ENCODE measurements at regions of chr1 and their contacts with region 1.

Region 1: GRCh38 chr1:233240829-233241682 is 54.5 kb downstream of the PCNX2 start:
- DNase-seq: peak; percentile 65
- H3K4me3 ChIP-seq: no peak overlapping the region
- H3K27ac ChIP-seq: no peak overlapping the region
- H3K4me1 ChIP-seq: no peaks in the 10 kb centered on the region
- H3K27me3 ChIP-seq: no peaks in the 10 kb centered on the region
- CTCF ChIP-seq: peak; percentile 76 to 81
- POLR2A ChIP-seq: no peak

Region 2: GRCh38 chr1:231724876-231725724 is 1516.0 kb before region 1 on chr1:
- CTCF ChIA-PET with region 1: no interaction called
- POLR2A ChIA-PET with region 1: no interaction called
- dilution Hi-C with region 1: no loop called
- intact Hi-C with region 1: loop called (anchors 10 kb)
- DNase-seq: peak; percentile 58
- H3K4me3 ChIP-seq: no peak overlapping the region
- H3K27ac ChIP-seq: no peak overlapping the region
- H3K4me1 ChIP-seq: no peaks in the 10 kb centered on the region
- H3K27me3 ChIP-seq: no peaks in the 10 kb centered on the region
- CTCF ChIP-seq: peak; percentile 54 to 56
- POLR2A ChIP-seq: no peak

Region 3: GRCh38 chr1:232635778-232636356 is 605.2 kb before region 1 on chr1:
- CTCF ChIA-PET with region 1: interaction called, 9 read pairs
- POLR2A ChIA-PET with region 1: no interaction called
- dilution Hi-C with region 1: no loop called
- intact Hi-C with region 1: loop called (anchors 1 kb)
- DNase-seq: peak; percentile 59
- H3K4me3 ChIP-seq: no peak overlapping the region
- H3K27ac ChIP-seq: no peak overlapping the region
- H3K4me1 ChIP-seq: peaks cover 4% of the 10 kb centered on the region
- H3K27me3 ChIP-seq: no peaks in the 10 kb centered on the region
- CTCF ChIP-seq: peak; percentile 52 to 53
- POLR2A ChIP-seq: no peak

Region 4: DNA sequence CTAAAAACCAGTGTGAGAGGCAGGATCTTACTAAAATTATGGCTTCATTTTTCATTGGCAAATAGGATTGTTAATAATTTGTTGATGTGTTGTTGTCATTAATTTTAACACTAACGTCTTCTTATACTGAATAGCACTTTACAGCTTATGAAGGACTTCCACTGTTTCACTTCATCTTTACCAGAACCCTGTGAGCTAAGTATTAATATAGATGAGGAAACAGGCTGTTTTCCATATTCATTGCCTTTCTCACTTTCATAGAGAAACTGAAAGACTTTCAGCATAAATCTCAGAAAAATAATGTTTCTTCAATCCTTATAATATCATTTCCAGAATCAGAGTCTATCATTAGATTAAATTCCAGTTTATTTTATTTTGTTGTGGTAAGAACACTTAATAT is 427.3 kb before region 1 on chr1:
- CTCF ChIA-PET with region 1: no interaction called
- POLR2A ChIA-PET with region 1: no interaction called
- dilution Hi-C with region 1: no loop called
- intact Hi-C with region 1: loop called (anchors 5 kb)
- DNase-seq: no peak
- H3K4me3 ChIP-seq: no peak overlapping the region
- H3K27ac ChIP-seq: no peak overlapping the region
- H3K4me1 ChIP-seq: no peaks in the 10 kb centered on the region
- H3K27me3 ChIP-seq: no peaks in the 10 kb centered on the region
- CTCF ChIP-seq: no peak
- POLR2A ChIP-seq: no peak

Region 5: GRCh38 chr1:232880354-232880753 is 360.7 kb before region 1 on chr1:
- CTCF ChIA-PET with region 1: interaction called, 3 read pairs
- POLR2A ChIA-PET with region 1: no interaction called
- dilution Hi-C with region 1: no loop called
- intact Hi-C with region 1: loop called (anchors 10 kb)
- DNase-seq: peak; percentile 26
- H3K4me3 ChIP-seq: no peak overlapping the region
- H3K27ac ChIP-seq: no peak overlapping the region
- H3K4me1 ChIP-seq: no peaks in the 10 kb centered on the region
- H3K27me3 ChIP-seq: no peaks in the 10 kb centered on the region
- CTCF ChIP-seq: peak; percentile 36 to 62
- POLR2A ChIP-seq: no peak

Region 6: DNA sequence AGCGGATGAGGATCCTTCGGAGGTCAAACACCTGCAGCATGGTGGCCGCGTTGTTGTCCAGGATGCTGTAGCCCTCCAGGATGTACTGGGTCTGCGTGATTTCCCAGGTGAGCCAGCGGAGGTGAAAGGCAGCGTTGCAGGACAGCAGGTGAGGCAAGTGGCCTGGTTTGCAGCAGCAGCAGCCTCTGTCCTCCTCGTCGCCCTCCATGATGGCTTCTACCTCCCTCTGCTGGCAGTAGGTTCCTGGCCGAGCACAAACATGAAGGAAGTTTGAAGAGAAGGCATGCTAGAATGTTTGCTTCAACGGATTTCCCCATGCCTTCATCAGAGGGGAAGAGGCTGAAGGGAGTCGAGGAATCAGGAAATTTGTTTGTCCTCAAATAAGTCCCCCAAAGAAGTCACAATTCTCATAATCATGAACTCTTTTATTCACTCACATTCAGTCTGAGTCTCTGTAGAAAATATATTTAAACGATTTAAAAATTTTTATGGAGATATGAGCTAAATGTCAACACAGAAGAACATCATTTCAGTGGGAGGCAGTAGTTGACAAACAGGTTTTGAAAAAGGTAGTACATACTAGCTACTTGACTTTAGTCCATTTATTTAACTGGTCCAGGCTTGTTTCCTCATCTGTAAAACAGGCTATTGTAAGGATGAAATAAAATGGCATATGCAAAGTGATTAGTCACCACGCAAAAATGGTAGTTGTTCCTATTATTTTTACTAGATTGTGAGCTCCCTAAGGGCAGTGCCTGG is 215.7 kb before region 1 on chr1:
- CTCF ChIA-PET with region 1: interaction called, 5 read pairs
- POLR2A ChIA-PET with region 1: no interaction called
- dilution Hi-C with region 1: no loop called
- intact Hi-C with region 1: loop called (anchors 1 kb)
- DNase-seq: peak; percentile 68
- H3K4me3 ChIP-seq: no peak overlapping the region
- H3K27ac ChIP-seq: no peak overlapping the region
- H3K4me1 ChIP-seq: peaks cover 6% of the 10 kb centered on the region
- H3K27me3 ChIP-seq: no peaks in the 10 kb centered on the region
- CTCF ChIP-seq: peak; percentile 31 to 69
- POLR2A ChIP-seq: no peak

Region 7: GRCh38 chr1:233172227-233172626 is 68.8 kb before region 1 on chr1:
- CTCF ChIA-PET with region 1: interaction called, 3 read pairs
- POLR2A ChIA-PET with region 1: no interaction called
- dilution Hi-C with region 1: no loop called
- intact Hi-C with region 1: loop called (anchors 2 kb)
- DNase-seq: peak; percentile 67
- H3K4me3 ChIP-seq: no peak overlapping the region
- H3K27ac ChIP-seq: no peak overlapping the region
- H3K4me1 ChIP-seq: no peaks in the 10 kb centered on the region
- H3K27me3 ChIP-seq: no peaks in the 10 kb centered on the region
- CTCF ChIP-seq: peak; percentile 26 to 42
- POLR2A ChIP-seq: no peak

Measured in endothelial cell of umbilical vein (primary cell).